ENCODE measurements at regions of chr3 and their contacts with region 1.

Region 1: GRCh38 chr3:47420511-47421484 is 40.0 kb downstream of the PTPN23 start:
- DNase-seq: peak; percentile 95
- ATAC-seq: peak; percentile 96
- H3K4me3 Mint-ChIP-seq: peak overlapping the region; percentile 69
- H3K27ac Mint-ChIP-seq: peak overlapping the region; percentile 99
- H3K4me1 Mint-ChIP-seq: peaks cover 23% of the 10 kb centered on the region
- H3K27me3 Mint-ChIP-seq: no peaks in the 10 kb centered on the region

Region 2: DNA sequence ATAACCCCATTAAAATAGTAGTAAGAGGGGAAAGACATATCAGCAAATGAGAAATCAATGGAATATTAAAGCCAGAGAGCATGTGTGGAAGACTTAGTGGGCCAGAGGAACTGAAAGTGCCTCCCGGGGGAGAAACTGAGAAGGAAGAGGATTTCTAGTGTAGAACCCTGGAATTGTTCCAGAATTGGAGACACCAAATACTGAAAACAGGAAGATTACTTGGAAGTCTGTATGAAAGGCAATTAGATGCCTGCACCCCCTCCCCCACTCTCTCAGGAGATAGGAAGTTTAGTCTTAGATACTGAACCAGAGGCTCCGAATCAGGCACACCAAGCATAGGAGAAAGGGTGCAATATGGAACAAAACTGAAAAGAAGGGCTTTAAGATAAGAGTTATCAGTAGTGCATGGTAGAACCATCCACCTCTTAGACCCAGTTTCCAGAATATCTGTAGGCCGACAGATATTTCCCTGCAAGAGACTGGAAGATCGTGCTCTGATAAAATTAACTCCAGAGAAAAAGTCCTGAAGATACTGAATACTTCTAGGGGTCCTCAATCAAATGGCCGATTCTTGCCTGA is 105.6 kb before region 1 on chr3:
- CTCF ChIA-PET with region 1: no interaction called
- POLR2A ChIA-PET with region 1: no interaction called
- DNase-seq: no peak
- ATAC-seq: no peak
- H3K4me3 Mint-ChIP-seq: no peak overlapping the region
- H3K27ac Mint-ChIP-seq: no peak overlapping the region
- H3K4me1 Mint-ChIP-seq: peaks cover 4% of the 10 kb centered on the region
- H3K27me3 Mint-ChIP-seq: no peaks in the 10 kb centered on the region

Region 3: GRCh38 chr3:47394140-47394870 is 26.5 kb before region 1 on chr3:
- CTCF ChIA-PET with region 1: interaction called, 10 read pairs
- POLR2A ChIA-PET with region 1: no interaction called
- DNase-seq: no peak
- ATAC-seq: no peak
- H3K4me3 Mint-ChIP-seq: no peak overlapping the region
- H3K27ac Mint-ChIP-seq: no peak overlapping the region
- H3K4me1 Mint-ChIP-seq: peaks cover 12% of the 10 kb centered on the region
- H3K27me3 Mint-ChIP-seq: no peaks in the 10 kb centered on the region

Region 4: GRCh38 chr3:47456984-47457383 is 36.2 kb after region 1 on chr3:
- CTCF ChIA-PET with region 1: interaction called, 10 read pairs
- POLR2A ChIA-PET with region 1: no interaction called
- DNase-seq: no peak
- ATAC-seq: no peak
- H3K4me3 Mint-ChIP-seq: no peak overlapping the region
- H3K27ac Mint-ChIP-seq: no peak overlapping the region
- H3K4me1 Mint-ChIP-seq: no peaks in the 10 kb centered on the region
- H3K27me3 Mint-ChIP-seq: no peaks in the 10 kb centered on the region

Region 5: GRCh38 chr3:47491186-47491585 is 70.4 kb after region 1 on chr3:
- CTCF ChIA-PET with region 1: interaction called, 14 read pairs
- POLR2A ChIA-PET with region 1: no interaction called
- DNase-seq: no peak
- ATAC-seq: no peak
- H3K4me3 Mint-ChIP-seq: no peak overlapping the region
- H3K27ac Mint-ChIP-seq: no peak overlapping the region
- H3K4me1 Mint-ChIP-seq: no peaks in the 10 kb centered on the region
- H3K27me3 Mint-ChIP-seq: no peaks in the 10 kb centered on the region

Region 6: GRCh38 chr3:47522082-47522987 is 101.5 kb after region 1 on chr3:
- CTCF ChIA-PET with region 1: interaction called, 11 read pairs
- POLR2A ChIA-PET with region 1: interaction called, 3 read pairs
- DNase-seq: peak; percentile 88
- ATAC-seq: peak; percentile 93
- H3K4me3 Mint-ChIP-seq: no peak overlapping the region
- H3K27ac Mint-ChIP-seq: peak overlapping the region; percentile 14
- H3K4me1 Mint-ChIP-seq: peaks cover 14% of the 10 kb centered on the region
- H3K27me3 Mint-ChIP-seq: no peaks in the 10 kb centered on the region